Activated CD8-positive, alpha-beta memory T cell treated with anti-CD3 and anti-CD28 coated beads, Interleukin-2, amount 10 ng/mL, durations not matched to agents 7 days and 5 days (primary cell): ENCODE measurements at regions of chr3 and their contacts with region 1.

Region 1: DNA sequence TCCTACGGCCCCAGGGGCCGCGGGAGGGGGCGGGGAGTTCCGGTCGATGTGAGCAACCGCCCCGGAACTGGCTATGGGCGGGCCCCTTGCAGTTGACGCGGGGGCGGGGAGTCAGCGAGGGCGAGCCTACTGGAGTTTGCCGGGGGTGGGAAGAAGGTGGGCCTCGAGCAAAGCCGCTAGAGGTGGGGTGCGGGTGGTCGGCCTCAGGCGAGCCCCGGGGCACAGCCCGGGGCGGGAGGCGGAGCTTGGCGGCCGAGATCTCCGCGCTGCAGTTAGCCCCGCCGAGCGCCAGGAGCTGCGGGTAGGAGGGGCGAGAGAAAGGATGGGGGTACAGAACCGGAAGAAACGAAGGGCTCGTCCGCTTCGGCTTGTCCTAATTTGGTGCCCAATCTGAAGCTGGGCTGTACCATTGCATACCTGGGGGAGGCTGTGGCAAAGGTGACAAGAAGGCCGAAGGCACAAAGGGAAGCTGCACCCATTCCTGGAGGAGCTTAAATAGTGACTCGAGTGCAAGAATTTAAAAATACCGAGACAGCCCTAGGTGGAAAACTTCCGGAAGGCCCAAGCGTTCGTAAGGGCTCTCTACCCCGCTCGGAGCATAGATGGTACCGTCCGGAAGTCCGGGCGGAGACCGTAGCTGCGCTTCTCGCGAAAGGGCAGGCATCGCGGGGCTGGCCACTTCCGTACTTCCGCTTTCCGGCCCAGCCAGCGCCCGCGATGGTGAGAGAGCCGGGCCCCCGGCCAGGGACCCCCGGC is at the starts of genes ARPC4 and TADA3:
- DNase-seq: peak; percentile 96
- ATAC-seq: peak; percentile 88
- H3K4me3 Mint-ChIP-seq: peak within 1 kb of the TSS; percentile 97
- H3K27ac Mint-ChIP-seq: peak within 1 kb of the TSS; percentile 100
- H3K4me1 Mint-ChIP-seq: peaks cover 52% of the 10 kb centered on the region
- H3K27me3 Mint-ChIP-seq: no peaks in the 10 kb centered on the region
- total RNA-seq, gene ARPC4: 274 to 300 TPM
- total RNA-seq, gene TADA3: 89.8 to 90.6 TPM

Region 2: DNA sequence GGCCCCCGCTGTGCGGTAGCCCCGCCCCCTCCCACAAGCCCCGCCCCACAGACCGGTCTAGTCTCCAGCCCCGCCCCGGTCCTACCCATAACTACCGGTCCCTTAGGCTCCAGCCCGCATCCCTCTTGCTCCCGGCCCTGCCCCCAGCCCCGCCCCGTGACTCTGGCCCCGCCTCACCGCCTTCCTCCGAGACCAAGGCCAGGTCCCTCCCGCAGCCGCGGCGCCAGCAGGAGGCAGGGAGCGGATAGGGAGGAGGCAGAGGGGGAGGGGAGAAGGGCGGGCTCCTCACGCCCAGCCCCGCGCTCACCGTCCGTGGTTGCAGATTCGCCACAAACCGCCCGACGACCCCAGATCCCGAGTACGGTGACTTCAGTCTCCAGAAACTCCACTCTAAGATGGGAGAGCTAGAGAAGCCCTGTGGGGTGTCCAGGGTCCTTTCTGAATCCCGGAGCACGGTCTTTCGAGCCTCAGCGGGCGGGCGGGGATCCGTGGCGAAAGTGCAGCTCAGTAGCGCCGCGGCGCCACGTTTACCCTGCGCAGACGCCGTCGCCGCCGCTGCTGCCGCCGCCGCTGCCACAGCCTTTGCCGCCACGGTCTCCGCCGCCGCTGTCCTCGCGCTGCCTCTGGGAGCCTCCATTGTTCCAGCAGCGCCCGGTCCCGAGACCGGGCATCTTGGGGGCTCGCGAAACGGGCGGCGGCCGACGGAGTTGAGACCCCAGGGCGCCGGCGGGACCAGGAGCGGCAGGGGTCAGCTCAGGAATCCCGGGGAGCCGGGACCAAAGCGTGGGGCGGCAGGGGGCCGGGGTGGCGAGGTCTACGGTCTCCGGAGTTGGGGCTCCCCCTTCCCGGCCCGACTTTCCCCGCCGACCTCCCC is 61.1 kb before region 1 on chr3 and contains the start of gene BRPF1:
- CTCF ChIA-PET with region 1: interaction called, 12 read pairs
- DNase-seq: peak; percentile 100
- ATAC-seq: peak; percentile 97
- H3K4me3 Mint-ChIP-seq: peak within 1 kb of the TSS; percentile 84
- H3K27ac Mint-ChIP-seq: peak within 1 kb of the TSS; percentile 97
- H3K4me1 Mint-ChIP-seq: peaks cover 60% of the 10 kb centered on the region
- H3K27me3 Mint-ChIP-seq: no peaks in the 10 kb centered on the region
- total RNA-seq, gene BRPF1: 48.1 to 50.1 TPM

Region 3: GRCh38 chr3:9803494-9803893 is 10.9 kb after region 1 on chr3:
- CTCF ChIA-PET with region 1: interaction called, 24 read pairs
- DNase-seq: no peak
- ATAC-seq: no peak
- H3K4me3 Mint-ChIP-seq: no peak overlapping the region
- H3K27ac Mint-ChIP-seq: no peak overlapping the region
- H3K4me1 Mint-ChIP-seq: peaks cover 33% of the 10 kb centered on the region
- H3K27me3 Mint-ChIP-seq: no peaks in the 10 kb centered on the region

Region 4: DNA sequence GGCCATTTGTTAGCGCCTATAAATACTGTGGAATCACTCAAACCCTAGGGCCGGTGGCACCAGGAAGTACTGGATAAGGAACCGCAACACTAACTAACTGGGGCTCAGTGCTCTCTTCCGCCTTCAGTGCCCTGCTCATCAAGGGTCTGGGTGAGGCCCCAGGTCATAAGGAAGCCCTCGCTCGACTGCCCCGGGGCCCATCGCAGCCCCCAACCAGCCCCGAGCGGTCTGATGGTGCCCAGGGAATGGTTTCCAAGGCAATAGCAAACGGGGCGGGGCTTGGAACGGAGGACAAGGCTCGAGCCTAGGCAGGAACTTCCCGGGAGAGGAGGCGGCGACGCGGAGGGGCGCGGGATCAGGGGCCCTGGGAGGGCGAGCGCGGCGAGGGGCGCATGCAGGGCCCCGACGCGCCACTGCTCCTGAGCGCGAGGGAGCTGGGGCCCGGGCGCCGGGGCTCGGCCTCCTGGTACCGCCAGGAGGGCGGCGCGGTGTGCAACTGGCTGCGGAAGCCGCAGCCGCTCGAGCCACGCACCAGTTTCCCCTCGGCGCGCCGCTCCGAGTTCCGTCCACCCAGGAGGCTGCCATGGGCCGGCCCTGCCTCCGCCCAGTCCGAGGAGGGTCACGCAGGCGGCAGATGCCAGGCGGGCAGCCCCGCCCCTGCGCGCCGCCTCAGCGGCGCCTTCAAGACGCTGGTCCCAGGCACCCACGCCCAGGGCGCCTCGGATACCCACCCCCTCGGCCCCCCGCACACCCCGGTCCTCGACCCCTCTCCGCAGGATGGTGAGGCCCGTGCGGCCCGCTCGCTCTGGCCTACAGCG is 17.2 kb after region 1 on chr3 and contains the start of gene TTLL3:
- CTCF ChIA-PET with region 1: interaction called, 24 read pairs
- DNase-seq: peak; percentile 64
- ATAC-seq: peak; percentile 67
- H3K4me3 Mint-ChIP-seq: peak within 1 kb of the TSS; percentile 85
- H3K27ac Mint-ChIP-seq: peak within 1 kb of the TSS; percentile 99
- H3K4me1 Mint-ChIP-seq: peaks cover 48% of the 10 kb centered on the region
- H3K27me3 Mint-ChIP-seq: no peaks in the 10 kb centered on the region
- total RNA-seq, gene TTLL3: 40.4 to 77.5 TPM

Region 5: DNA sequence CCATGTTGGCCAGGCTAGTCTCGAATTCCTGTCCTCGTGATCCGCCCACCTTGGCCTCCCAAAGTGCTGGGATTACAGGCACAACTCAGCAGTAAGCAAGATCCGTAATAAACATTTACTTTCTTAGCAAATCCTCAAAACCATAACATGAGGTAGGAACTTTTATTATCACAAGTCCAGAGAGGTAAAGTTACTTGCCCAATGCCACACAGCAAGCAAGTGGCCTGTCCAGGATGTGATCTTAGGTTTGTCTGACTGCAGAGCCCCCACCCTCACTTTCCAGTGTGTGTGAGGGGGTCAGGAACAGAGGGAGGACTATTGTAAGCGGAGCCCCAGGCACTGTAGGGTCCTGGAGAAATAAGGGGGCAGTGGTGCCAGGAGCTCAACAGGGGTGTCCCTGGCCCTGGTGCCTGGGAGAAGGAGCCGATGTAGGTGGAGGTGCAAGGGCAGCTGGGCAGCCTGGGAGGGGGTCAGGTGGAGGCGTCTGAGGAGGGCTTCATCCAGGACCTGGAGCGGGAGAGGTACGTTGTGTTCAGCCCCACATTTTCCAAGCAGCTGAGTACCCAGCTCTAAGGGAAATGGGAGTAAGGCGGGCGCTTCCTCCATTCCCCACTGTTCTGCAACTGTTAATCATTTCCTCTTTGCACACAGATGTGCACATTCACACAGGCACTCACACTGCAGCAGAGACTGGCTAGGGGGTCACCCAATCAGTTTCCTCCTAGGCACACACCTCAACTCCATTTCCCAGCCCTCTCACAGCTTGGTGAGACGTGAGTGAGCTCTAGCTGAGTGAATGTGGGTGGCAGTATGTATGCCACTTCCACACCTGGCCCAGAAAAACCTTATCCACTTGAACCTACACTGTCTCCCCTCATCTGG is 45.4 kb after region 1 on chr3:
- CTCF ChIA-PET with region 1: no interaction called
- DNase-seq: no peak
- ATAC-seq: no peak
- H3K4me3 Mint-ChIP-seq: no peak overlapping the region
- H3K27ac Mint-ChIP-seq: no peak overlapping the region
- H3K4me1 Mint-ChIP-seq: peaks cover 8% of the 10 kb centered on the region
- H3K27me3 Mint-ChIP-seq: no peaks in the 10 kb centered on the region